Naive thymus-derived CD4-positive, alpha-beta T cell (primary cell): ENCODE measurements at regions of chr13 and their contacts with region 1.

Region 1: GRCh38 chr13:46668302-46668720 is 115.3 kb downstream of the LRCH1 start:
- DNase-seq: no peak
- ATAC-seq: peak; percentile 49
- H3K4me3 ChIP-seq: peak overlapping the region; percentile 55
- H3K4me3 Mint-ChIP-seq: peak overlapping the region; percentile 78 to 89 (median 84)
- H3K27ac ChIP-seq: peak overlapping the region; percentile 56
- H3K27ac Mint-ChIP-seq: peak overlapping the region; percentile 79 to 93 (median 88)
- H3K4me1 ChIP-seq: peaks cover 0 to 26% of the 10 kb centered on the region in 2 donors
- H3K4me1 Mint-ChIP-seq: peaks cover 35 to 65% (median 52%) of the 10 kb centered on the region in 7 donors
- H3K27me3 ChIP-seq: no peaks in the 10 kb centered on the region
- H3K27me3 Mint-ChIP-seq: no peaks in the 10 kb centered on the region

Region 2: GRCh38 chr13:46577696-46578589 is 90.4 kb before region 1 on chr13:
- CTCF ChIA-PET with region 1: no interaction called
- POLR2A ChIA-PET with region 1: no interaction called
- intact Hi-C with region 1: no loop called
- DNase-seq: no peak
- ATAC-seq: peak; percentile 32
- H3K4me3 ChIP-seq: no peak overlapping the region
- H3K4me3 Mint-ChIP-seq: peak overlapping the region in 7 of 10 donors; percentile 10 to 66 (median 46)
- H3K27ac ChIP-seq: no peak overlapping the region
- H3K27ac Mint-ChIP-seq: peak overlapping the region in 5 of 9 donors; percentile 1 to 81 (median 9)
- H3K4me1 ChIP-seq: peaks cover 3 to 11% of the 10 kb centered on the region in 2 donors
- H3K4me1 Mint-ChIP-seq: peaks cover 36 to 82% (median 67%) of the 10 kb centered on the region in 7 donors
- H3K27me3 ChIP-seq: no peaks in the 10 kb centered on the region
- H3K27me3 Mint-ChIP-seq: no peaks in the 10 kb centered on the region

Region 3: GRCh38 chr13:46593398-46593797 is 74.9 kb before region 1 on chr13:
- CTCF ChIA-PET with region 1: no interaction called
- POLR2A ChIA-PET with region 1: interaction called, 3 read pairs
- intact Hi-C with region 1: loop called (anchors 2 to 5 kb)
- DNase-seq: peak; percentile 14 to 85 (median 77)
- ATAC-seq: peak; percentile 95
- H3K4me3 ChIP-seq: no peak overlapping the region
- H3K4me3 Mint-ChIP-seq: peak overlapping the region; percentile 52 to 83 (median 66)
- H3K27ac ChIP-seq: peak overlapping the region; percentile 54
- H3K27ac Mint-ChIP-seq: peak overlapping the region in 8 of 9 donors; percentile 9 to 92 (median 83)
- H3K4me1 ChIP-seq: peaks cover 11 to 42% of the 10 kb centered on the region in 2 donors
- H3K4me1 Mint-ChIP-seq: peaks cover 45 to 80% (median 74%) of the 10 kb centered on the region in 7 donors
- H3K27me3 ChIP-seq: no peaks in the 10 kb centered on the region
- H3K27me3 Mint-ChIP-seq: no peaks in the 10 kb centered on the region

Region 4: GRCh38 chr13:46656786-46657185 is 11.5 kb before region 1 on chr13:
- CTCF ChIA-PET with region 1: interaction called, 3 read pairs
- POLR2A ChIA-PET with region 1: interaction called, 3 read pairs
- intact Hi-C with region 1: loop called in 1 of 2 experiments (anchors 1 kb)
- DNase-seq: no peak
- ATAC-seq: peak; percentile 38
- H3K4me3 ChIP-seq: no peak overlapping the region
- H3K4me3 Mint-ChIP-seq: peak overlapping the region in 1 of 10 donors; percentile 70
- H3K27ac ChIP-seq: no peak overlapping the region
- H3K27ac Mint-ChIP-seq: peak overlapping the region in 5 of 9 donors; percentile 49 to 92 (median 63)
- H3K4me1 ChIP-seq: peaks cover 0 to 18% of the 10 kb centered on the region in 2 donors
- H3K4me1 Mint-ChIP-seq: peaks cover 19 to 59% (median 32%) of the 10 kb centered on the region in 7 donors
- H3K27me3 ChIP-seq: no peaks in the 10 kb centered on the region
- H3K27me3 Mint-ChIP-seq: no peaks in the 10 kb centered on the region

Region 5: DNA sequence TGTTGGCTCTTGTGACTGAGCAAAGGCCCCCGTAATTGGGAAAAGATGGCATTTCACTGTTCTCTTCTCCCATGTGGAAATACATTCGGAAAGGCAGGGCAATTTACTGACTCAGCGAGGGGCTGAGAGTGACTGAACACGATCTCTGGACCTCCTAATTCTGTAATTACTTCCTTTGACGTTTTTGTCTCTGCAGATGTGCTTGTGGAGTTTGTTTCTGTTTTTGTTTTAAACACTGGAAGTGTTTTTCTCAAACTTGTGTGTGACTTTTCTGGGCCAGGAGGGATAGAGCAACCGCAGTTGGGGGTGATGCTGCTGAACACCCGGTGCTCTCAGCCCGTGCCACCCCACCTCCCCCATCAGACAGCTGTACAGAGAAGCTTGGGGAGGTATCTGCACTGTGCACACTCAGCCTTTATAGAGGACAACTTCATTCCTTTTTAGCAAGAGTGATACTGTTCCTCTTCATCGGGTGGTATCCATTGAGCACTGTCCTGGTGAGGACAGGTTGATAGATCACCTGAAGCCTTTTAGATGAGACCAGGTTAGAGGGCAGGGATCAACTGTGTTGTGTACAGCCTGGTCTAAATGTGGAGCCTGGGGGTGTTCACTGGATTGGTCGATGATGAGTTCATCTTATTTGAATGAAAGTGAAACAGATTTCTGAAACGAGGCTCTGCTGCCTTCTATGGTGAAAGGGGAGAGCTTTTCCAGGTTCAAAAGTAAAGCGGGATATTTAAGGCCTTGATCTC is 11.2 kb after region 1 on chr13:
- CTCF ChIA-PET with region 1: no interaction called
- POLR2A ChIA-PET with region 1: no interaction called
- intact Hi-C with region 1: loop called in 1 of 2 experiments (anchors 1 kb)
- DNase-seq: peak in 8 of 9 donors; percentile 14 to 64 (median 44)
- ATAC-seq: peak; percentile 92
- H3K4me3 ChIP-seq: peak overlapping the region; percentile 39
- H3K4me3 Mint-ChIP-seq: no peak overlapping the region
- H3K27ac ChIP-seq: peak overlapping the region; percentile 55
- H3K27ac Mint-ChIP-seq: no peak overlapping the region
- H3K4me1 ChIP-seq: peaks cover 5 to 20% of the 10 kb centered on the region in 2 donors
- H3K4me1 Mint-ChIP-seq: peaks cover under 1 to 35% (median 9%) of the 10 kb centered on the region in 7 donors
- H3K27me3 ChIP-seq: no peaks in the 10 kb centered on the region
- H3K27me3 Mint-ChIP-seq: no peaks in the 10 kb centered on the region

Region 6: DNA sequence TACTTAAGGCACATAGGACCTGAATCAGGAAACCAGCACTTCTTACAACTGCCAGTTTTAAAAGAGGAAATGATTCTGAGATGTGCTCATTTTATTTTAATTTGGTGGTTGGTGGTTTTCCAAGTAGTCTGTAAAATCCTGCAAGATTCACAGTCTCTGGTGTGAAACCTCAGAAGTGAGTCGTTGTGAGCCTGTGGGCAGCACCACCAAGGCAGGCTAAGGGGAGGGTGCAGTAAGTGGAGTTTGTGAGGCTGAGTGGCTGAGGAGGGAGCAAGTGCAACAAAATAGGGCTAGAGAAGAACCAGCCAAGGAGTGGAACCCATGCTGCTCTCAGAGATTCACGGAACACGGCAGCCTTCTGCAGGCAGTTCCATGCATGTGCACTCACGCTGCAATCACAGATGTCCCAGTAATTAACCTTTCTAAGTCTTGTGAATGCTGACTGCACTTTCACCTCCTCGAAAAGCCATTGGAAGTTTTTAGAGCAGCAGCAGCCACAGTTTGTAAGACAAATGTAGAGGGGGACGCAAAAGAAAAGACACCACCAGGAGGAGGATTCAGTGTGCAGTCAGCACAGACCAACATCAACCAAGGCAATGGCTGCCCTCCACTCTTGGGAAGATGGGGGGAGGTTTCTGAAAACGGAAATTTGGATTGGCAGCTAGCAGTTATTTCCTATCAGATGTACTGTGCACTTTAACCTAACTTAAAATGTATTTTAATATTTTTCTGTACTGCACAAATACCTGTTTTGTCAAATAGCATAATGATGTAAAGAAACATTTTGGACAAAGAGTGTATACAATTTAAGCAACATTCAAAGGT is 83.7 kb after region 1 on chr13:
- CTCF ChIA-PET with region 1: no interaction called
- POLR2A ChIA-PET with region 1: no interaction called
- intact Hi-C with region 1: loop called in 1 of 2 experiments (anchors 5 kb)
- DNase-seq: peak in 8 of 9 donors; percentile 11 to 57 (median 23)
- ATAC-seq: peak; percentile 92
- H3K4me3 ChIP-seq: no peak overlapping the region
- H3K4me3 Mint-ChIP-seq: peak overlapping the region in 9 of 10 donors; percentile 5 to 71 (median 59)
- H3K27ac ChIP-seq: peak overlapping the region; percentile 16
- H3K27ac Mint-ChIP-seq: peak overlapping the region in 8 of 9 donors; percentile 39 to 85 (median 78)
- H3K4me1 ChIP-seq: peaks cover 11 to 13% of the 10 kb centered on the region in 2 donors
- H3K4me1 Mint-ChIP-seq: peaks cover 10 to 44% (median 34%) of the 10 kb centered on the region in 7 donors
- H3K27me3 ChIP-seq: no peaks in the 10 kb centered on the region
- H3K27me3 Mint-ChIP-seq: no peaks in the 10 kb centered on the region